ENCODE measurements at regions of chr19 and their contacts with region 1.

Region 1: GRCh38 chr19:17859533-17860330 is at the start of gene RPL18A:
- DNase-seq: peak; percentile 99
- ATAC-seq: peak; percentile 94
- H3K4me3 Mint-ChIP-seq: peak within 1 kb of the TSS; percentile 82
- H3K27ac Mint-ChIP-seq: peak within 1 kb of the TSS; percentile 97
- H3K4me1 Mint-ChIP-seq: peaks cover 30% of the 10 kb centered on the region
- H3K27me3 Mint-ChIP-seq: no peaks in the 10 kb centered on the region
- CTCF ChIP-seq: peak; percentile 79
- total RNA-seq, gene RPL18A: 3,663 to 3,679 TPM

Region 2: GRCh38 chr19:17641181-17641580 is 218.6 kb before region 1 on chr19:
- CTCF ChIA-PET with region 1: no interaction called
- POLR2A ChIA-PET with region 1: no interaction called
- intact Hi-C with region 1: no loop called
- DNase-seq: no peak
- ATAC-seq: no peak
- H3K4me3 Mint-ChIP-seq: no peak overlapping the region
- H3K27ac Mint-ChIP-seq: no peak overlapping the region
- H3K4me1 Mint-ChIP-seq: no peaks in the 10 kb centered on the region
- H3K27me3 Mint-ChIP-seq: peaks cover 8% of the 10 kb centered on the region
- CTCF ChIP-seq: no peak

Region 3: GRCh38 chr19:17794731-17795536 is 64.8 kb before region 1 on chr19 and contains the start of gene B3GNT3:
- CTCF ChIA-PET with region 1: interaction called, 16 read pairs
- POLR2A ChIA-PET with region 1: no interaction called
- intact Hi-C with region 1: loop called (anchors 10 kb)
- DNase-seq: no peak
- ATAC-seq: no peak
- H3K4me3 Mint-ChIP-seq: peak within 1 kb of the TSS; percentile 41
- H3K27ac Mint-ChIP-seq: no peak within 1 kb of the TSS
- H3K4me1 Mint-ChIP-seq: peaks cover 46% of the 10 kb centered on the region
- H3K27me3 Mint-ChIP-seq: peaks cover 4% of the 10 kb centered on the region
- CTCF ChIP-seq: no peak
- total RNA-seq, gene B3GNT3: 0.20 TPM in 1 of 2 experiments, not detected in the other

Region 4: DNA sequence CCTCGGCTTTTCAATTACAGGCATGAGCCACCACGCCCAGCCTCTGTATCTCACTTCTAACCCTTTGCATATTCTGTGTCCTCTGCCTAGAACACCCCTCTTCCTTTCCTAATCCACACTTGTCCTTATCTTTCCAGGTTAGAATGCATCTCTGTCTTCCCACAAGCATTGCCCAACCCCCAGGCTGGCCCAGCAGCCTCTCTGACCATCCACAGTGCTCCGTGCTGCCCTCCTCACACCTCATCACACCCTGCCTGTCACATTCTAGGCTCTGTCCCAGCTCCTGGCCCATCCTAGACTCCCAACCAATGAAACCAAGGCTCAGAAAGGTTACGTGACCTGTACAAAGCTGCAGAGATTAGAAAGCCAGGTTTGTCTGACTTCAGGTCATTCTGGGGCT is 23.2 kb before region 1 on chr19:
- CTCF ChIA-PET with region 1: interaction called, 5 read pairs
- POLR2A ChIA-PET with region 1: interaction called, 10 read pairs
- intact Hi-C with region 1: no loop called
- DNase-seq: no peak
- ATAC-seq: no peak
- H3K4me3 Mint-ChIP-seq: no peak overlapping the region
- H3K27ac Mint-ChIP-seq: peak overlapping the region; percentile 0
- H3K4me1 Mint-ChIP-seq: peaks cover 15% of the 10 kb centered on the region
- H3K27me3 Mint-ChIP-seq: no peaks in the 10 kb centered on the region
- CTCF ChIP-seq: no peak

Region 5: GRCh38 chr19:17873786-17874757 is 14.3 kb after region 1 on chr19:
- CTCF ChIA-PET with region 1: interaction called, 38 read pairs
- POLR2A ChIA-PET with region 1: interaction called, 122 read pairs
- intact Hi-C with region 1: no loop called
- DNase-seq: peak; percentile 85
- ATAC-seq: peak; percentile 81
- H3K4me3 Mint-ChIP-seq: peak overlapping the region; percentile 89
- H3K27ac Mint-ChIP-seq: peak overlapping the region; percentile 34
- H3K4me1 Mint-ChIP-seq: peaks cover 10% of the 10 kb centered on the region
- H3K27me3 Mint-ChIP-seq: no peaks in the 10 kb centered on the region
- CTCF ChIP-seq: no peak

Region 6: GRCh38 chr19:17889609-17890214 is 30.0 kb after region 1 on chr19:
- CTCF ChIA-PET with region 1: no interaction called
- POLR2A ChIA-PET with region 1: no interaction called
- intact Hi-C with region 1: no loop called
- DNase-seq: peak; percentile 30
- ATAC-seq: no peak
- H3K4me3 Mint-ChIP-seq: no peak overlapping the region
- H3K27ac Mint-ChIP-seq: no peak overlapping the region
- H3K4me1 Mint-ChIP-seq: no peaks in the 10 kb centered on the region
- H3K27me3 Mint-ChIP-seq: no peaks in the 10 kb centered on the region
- CTCF ChIP-seq: no peak

Region 7: GRCh38 chr19:17938092-17938845 is 78.5 kb after region 1 on chr19:
- CTCF ChIA-PET with region 1: interaction called, 194 read pairs
- POLR2A ChIA-PET with region 1: interaction called, 123 read pairs
- intact Hi-C with region 1: loop called (anchors 2 kb)
- DNase-seq: peak; percentile 91
- ATAC-seq: peak; percentile 98
- H3K4me3 Mint-ChIP-seq: no peak overlapping the region
- H3K27ac Mint-ChIP-seq: no peak overlapping the region
- H3K4me1 Mint-ChIP-seq: peaks cover 8% of the 10 kb centered on the region
- H3K27me3 Mint-ChIP-seq: no peaks in the 10 kb centered on the region
- CTCF ChIP-seq: peak; percentile 78

Region 8: GRCh38 chr19:18065173-18065495 is 205.4 kb after region 1 on chr19:
- CTCF ChIA-PET with region 1: no interaction called
- POLR2A ChIA-PET with region 1: no interaction called
- intact Hi-C with region 1: no loop called
- DNase-seq: no peak
- ATAC-seq: no peak
- H3K4me3 Mint-ChIP-seq: no peak overlapping the region
- H3K27ac Mint-ChIP-seq: no peak overlapping the region
- H3K4me1 Mint-ChIP-seq: no peaks in the 10 kb centered on the region
- H3K27me3 Mint-ChIP-seq: no peaks in the 10 kb centered on the region
- CTCF ChIP-seq: no peak

Measured in activated CD8-positive, alpha-beta T cell treated with anti-CD3 and anti-CD28 coated beads for 36 hours (primary cell).